CD4-positive, alpha-beta T cell (primary cell): ENCODE measurements at regions of chr15 and their contacts with region 1.

Region 1: DNA sequence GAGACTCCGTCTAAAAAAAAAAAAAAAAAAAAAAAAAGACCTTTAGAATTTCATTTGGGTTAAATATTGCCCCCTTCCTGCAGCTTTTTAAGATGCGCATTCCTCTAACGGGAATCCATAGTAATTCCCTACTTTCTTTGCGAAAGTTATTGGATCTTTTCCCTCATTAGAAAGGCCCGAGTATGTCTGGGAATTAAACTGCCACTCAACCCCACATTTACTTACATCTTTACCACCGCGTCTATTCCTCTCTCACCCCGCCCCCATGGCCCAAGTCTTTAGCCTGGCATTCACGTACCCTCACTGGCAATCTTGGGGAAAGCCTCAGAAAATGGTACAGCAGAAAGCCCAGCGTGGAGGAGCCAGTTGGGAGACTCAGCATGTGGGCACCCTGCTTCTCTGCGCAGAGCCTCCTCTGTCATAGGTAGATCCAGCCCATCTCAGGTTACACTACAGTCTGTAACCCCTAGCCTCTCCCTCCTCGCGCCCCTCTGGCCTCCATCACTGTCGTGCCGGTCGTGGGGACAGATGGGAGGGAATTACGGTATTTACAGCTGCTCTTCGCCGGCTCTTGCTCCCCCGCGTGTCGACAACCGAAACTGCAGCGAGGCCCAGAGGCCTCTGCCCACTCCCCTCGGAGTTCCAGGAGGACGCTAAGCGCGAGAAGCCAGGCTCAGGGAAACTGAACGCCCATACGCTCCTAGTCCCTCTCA is 6.4 kb upstream of the ANKDD1A start:
- DNase-seq: peak; percentile 63 to 88 (median 74)
- ATAC-seq: peak; percentile 74
- H3K4me3 ChIP-seq: peak overlapping the region; percentile 24
- H3K4me3 Mint-ChIP-seq: peak overlapping the region; percentile 79
- H3K27ac ChIP-seq: no peak overlapping the region
- H3K27ac Mint-ChIP-seq: no peak overlapping the region
- H3K4me1 ChIP-seq: peaks cover 36% of the 10 kb centered on the region
- H3K4me1 Mint-ChIP-seq: peaks cover 46% of the 10 kb centered on the region
- H3K27me3 ChIP-seq: peaks cover 0 to 3% of the 10 kb centered on the region in 2 experiments
- H3K27me3 Mint-ChIP-seq: peaks cover 16% of the 10 kb centered on the region
- CTCF ChIP-seq: peak; percentile 94

Region 2: DNA sequence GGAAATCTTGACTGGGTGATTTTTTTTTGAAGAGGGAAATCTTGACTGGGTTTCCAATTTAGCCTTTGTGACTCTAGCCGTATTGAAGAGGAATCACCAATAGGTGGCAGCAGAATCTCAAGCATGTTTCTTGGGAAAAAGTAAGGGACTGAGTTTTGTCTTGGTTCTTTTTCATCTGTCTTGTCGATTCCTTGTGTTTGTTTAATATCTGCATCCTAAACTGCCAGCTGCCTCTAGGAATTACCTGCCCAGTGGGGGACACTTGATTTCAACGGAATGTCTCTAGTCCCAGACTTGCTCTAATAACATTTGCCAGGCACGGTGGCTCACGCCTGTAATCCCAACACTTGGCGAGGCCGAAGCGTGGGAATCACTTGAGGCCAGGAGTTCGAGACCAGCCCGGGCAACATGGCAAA is 219.1 kb before region 1 on chr15:
- CTCF ChIA-PET with region 1: interaction called, 3 read pairs
- POLR2A ChIA-PET with region 1: no interaction called
- intact Hi-C with region 1: loop called (anchors 5 kb)
- DNase-seq: peak in 5 of 14 experiments; percentile 12 to 73 (median 53)
- ATAC-seq: peak; percentile 48
- H3K4me3 ChIP-seq: no peak overlapping the region
- H3K4me3 Mint-ChIP-seq: no peak overlapping the region
- H3K27ac ChIP-seq: no peak overlapping the region
- H3K27ac Mint-ChIP-seq: no peak overlapping the region
- H3K4me1 ChIP-seq: no peaks in the 10 kb centered on the region
- H3K4me1 Mint-ChIP-seq: peaks cover 6% of the 10 kb centered on the region
- H3K27me3 ChIP-seq: no peaks in the 10 kb centered on the region
- H3K27me3 Mint-ChIP-seq: no peaks in the 10 kb centered on the region
- CTCF ChIP-seq: peak; percentile 79

Region 3: GRCh38 chr15:64836023-64836536 is 69.2 kb before region 1 on chr15:
- CTCF ChIA-PET with region 1: interaction called, 10 read pairs
- POLR2A ChIA-PET with region 1: no interaction called
- intact Hi-C with region 1: loop called in 1 of 2 experiments (anchors 2 kb)
- DNase-seq: no peak
- ATAC-seq: no peak
- H3K4me3 ChIP-seq: no peak overlapping the region
- H3K4me3 Mint-ChIP-seq: peak overlapping the region; percentile 64
- H3K27ac ChIP-seq: peak overlapping the region in 1 of 2 donors; percentile 3
- H3K27ac Mint-ChIP-seq: peak overlapping the region; percentile 51
- H3K4me1 ChIP-seq: peaks cover 48% of the 10 kb centered on the region
- H3K4me1 Mint-ChIP-seq: peaks cover 54% of the 10 kb centered on the region
- H3K27me3 ChIP-seq: no peaks in the 10 kb centered on the region
- H3K27me3 Mint-ChIP-seq: no peaks in the 10 kb centered on the region
- CTCF ChIP-seq: peak; percentile 24

Region 4: GRCh38 chr15:64856429-64857145 is 48.7 kb before region 1 on chr15:
- CTCF ChIA-PET with region 1: interaction called, 6 read pairs
- POLR2A ChIA-PET with region 1: no interaction called
- intact Hi-C with region 1: loop called in 1 of 2 experiments (anchors 5 kb)
- DNase-seq: no peak
- ATAC-seq: no peak
- H3K4me3 ChIP-seq: no peak overlapping the region
- H3K4me3 Mint-ChIP-seq: no peak overlapping the region
- H3K27ac ChIP-seq: no peak overlapping the region
- H3K27ac Mint-ChIP-seq: peak overlapping the region; percentile 68
- H3K4me1 ChIP-seq: peaks cover 63% of the 10 kb centered on the region
- H3K4me1 Mint-ChIP-seq: peaks cover 52% of the 10 kb centered on the region
- H3K27me3 ChIP-seq: no peaks in the 10 kb centered on the region
- H3K27me3 Mint-ChIP-seq: no peaks in the 10 kb centered on the region
- CTCF ChIP-seq: no peak

Region 5: DNA sequence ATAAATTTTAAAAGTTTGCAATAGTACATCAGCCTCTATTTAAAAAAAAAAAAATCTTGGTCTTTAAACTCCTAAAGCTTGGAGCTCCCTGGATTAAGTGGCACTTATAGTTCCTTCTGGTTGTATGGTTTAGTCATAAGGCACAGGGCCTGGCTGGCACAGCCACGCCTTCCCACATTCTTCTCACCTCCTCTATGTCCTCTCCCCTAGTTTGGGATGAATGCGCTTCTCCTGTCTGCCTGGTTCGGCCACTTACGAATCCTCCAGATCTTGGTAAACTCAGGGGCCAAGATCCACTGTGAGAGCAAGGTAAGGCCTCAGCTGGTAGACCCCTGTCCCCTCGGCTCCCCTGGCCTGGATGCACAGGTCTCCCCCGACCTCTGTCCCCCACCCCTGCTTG is 16.4 kb after region 1 on chr15:
- CTCF ChIA-PET with region 1: no interaction called
- POLR2A ChIA-PET with region 1: no interaction called
- intact Hi-C with region 1: no loop called
- DNase-seq: no peak
- ATAC-seq: no peak
- H3K4me3 ChIP-seq: no peak overlapping the region
- H3K4me3 Mint-ChIP-seq: no peak overlapping the region
- H3K27ac ChIP-seq: no peak overlapping the region
- H3K27ac Mint-ChIP-seq: no peak overlapping the region
- H3K4me1 ChIP-seq: no peaks in the 10 kb centered on the region
- H3K4me1 Mint-ChIP-seq: no peaks in the 10 kb centered on the region
- H3K27me3 ChIP-seq: no peaks in the 10 kb centered on the region
- H3K27me3 Mint-ChIP-seq: no peaks in the 10 kb centered on the region
- CTCF ChIP-seq: no peak